CD4-positive, alpha-beta memory T cell (primary cell): ENCODE measurements at regions of chr4 and their contacts with region 1.

Region 1: GRCh38 chr4:1899149-1900086 is 28.2 kb downstream of the NSD2 start:
- DNase-seq: peak; percentile 68 to 79 (median 75)
- H3K4me3 ChIP-seq: no peak overlapping the region
- H3K4me3 Mint-ChIP-seq: peak overlapping the region in 4 of 8 donors; percentile 52 to 69 (median 56)
- H3K27ac ChIP-seq: no peak overlapping the region
- H3K27ac Mint-ChIP-seq: peak overlapping the region in 3 of 7 donors; percentile 19 to 85 (median 85)
- H3K4me1 ChIP-seq: peaks cover 6% of the 10 kb centered on the region
- H3K4me1 Mint-ChIP-seq: peaks cover 12 to 21% (median 14%) of the 10 kb centered on the region in 4 donors
- H3K27me3 ChIP-seq: no peaks in the 10 kb centered on the region
- H3K27me3 Mint-ChIP-seq: no peaks in the 10 kb centered on the region

Region 2: GRCh38 chr4:1693129-1693896 is 206.1 kb before region 1 on chr4:
- CTCF ChIA-PET with region 1: interaction called, 43 read pairs
- POLR2A ChIA-PET with region 1: no interaction called
- intact Hi-C with region 1: loop called (anchors 1 kb)
- DNase-seq: peak; percentile 77 to 81 (median 81)
- H3K4me3 ChIP-seq: no peak overlapping the region
- H3K4me3 Mint-ChIP-seq: no peak overlapping the region
- H3K27ac ChIP-seq: no peak overlapping the region
- H3K27ac Mint-ChIP-seq: peak overlapping the region in 6 of 7 donors; percentile 26 to 90 (median 62)
- H3K4me1 ChIP-seq: peaks cover 4% of the 10 kb centered on the region
- H3K4me1 Mint-ChIP-seq: peaks cover 3 to 5% (median 4%) of the 10 kb centered on the region in 4 donors
- H3K27me3 ChIP-seq: no peaks in the 10 kb centered on the region
- H3K27me3 Mint-ChIP-seq: no peaks in the 10 kb centered on the region

Region 3: DNA sequence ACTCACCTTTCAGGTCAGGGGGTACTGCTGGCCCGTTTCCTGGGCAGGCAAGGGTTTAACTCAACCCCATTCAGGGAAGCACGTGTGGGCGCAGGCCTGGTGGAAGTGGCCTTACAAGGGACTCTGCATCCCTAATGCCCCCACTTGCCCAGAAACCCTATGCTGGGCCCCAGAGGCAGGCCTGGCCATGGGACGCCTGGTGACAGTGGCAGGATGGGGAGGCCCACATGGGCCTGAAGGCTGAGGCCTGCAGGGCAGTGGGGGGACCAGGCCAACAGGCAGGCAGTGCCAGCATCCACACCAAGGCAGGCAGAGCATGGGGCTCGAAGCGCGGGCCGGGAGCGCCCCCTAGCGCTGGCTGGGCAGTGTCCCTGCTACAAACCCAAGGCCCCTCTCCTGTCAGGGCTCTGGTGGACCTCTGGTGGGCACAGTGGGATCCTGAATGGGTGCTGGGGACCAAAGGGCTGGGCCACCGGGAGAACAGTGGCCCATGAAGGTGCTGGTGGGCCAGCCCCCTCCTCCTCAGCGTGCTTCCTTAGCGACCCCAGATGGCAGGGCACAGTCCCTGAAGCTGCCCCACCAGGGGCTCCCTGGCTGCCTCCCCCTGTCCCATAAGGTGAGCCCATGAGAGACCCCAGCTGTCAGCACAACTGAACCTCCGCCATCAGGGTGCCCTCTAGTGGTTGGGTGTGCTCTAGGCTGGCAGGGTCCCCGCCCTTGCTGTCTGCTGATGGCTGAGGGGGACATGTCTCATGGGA is 89.5 kb before region 1 on chr4:
- CTCF ChIA-PET with region 1: interaction called, 32 read pairs
- POLR2A ChIA-PET with region 1: no interaction called
- intact Hi-C with region 1: loop called (anchors 1 kb)
- DNase-seq: peak; percentile 57 to 65 (median 60)
- H3K4me3 ChIP-seq: no peak overlapping the region
- H3K4me3 Mint-ChIP-seq: no peak overlapping the region
- H3K27ac ChIP-seq: no peak overlapping the region
- H3K27ac Mint-ChIP-seq: no peak overlapping the region
- H3K4me1 ChIP-seq: no peaks in the 10 kb centered on the region
- H3K4me1 Mint-ChIP-seq: peaks cover 0 to 1% (median 0%) of the 10 kb centered on the region in 4 donors
- H3K27me3 ChIP-seq: no peaks in the 10 kb centered on the region
- H3K27me3 Mint-ChIP-seq: no peaks in the 10 kb centered on the region

Region 4: DNA sequence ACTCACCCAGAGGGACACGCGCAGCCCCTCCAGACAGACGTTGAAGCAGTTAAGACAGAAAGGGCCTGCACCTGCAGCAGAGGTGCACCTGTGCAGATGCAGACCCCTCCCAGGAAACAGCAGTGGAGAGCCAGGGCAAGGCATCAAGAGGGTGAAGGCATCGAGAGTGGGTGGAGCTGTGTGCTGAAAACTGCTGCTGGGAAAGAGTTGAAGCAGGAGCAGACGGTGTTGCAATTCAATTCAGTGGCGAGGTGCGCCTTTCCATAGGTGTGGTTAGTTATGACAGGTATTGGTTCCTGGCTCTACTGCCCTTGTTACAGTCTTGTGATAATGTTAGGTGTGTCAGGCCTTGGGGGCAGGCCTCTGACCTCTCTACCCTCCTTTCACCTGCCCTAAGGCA is 60.1 kb before region 1 on chr4:
- CTCF ChIA-PET with region 1: interaction called, 10 read pairs
- POLR2A ChIA-PET with region 1: no interaction called
- intact Hi-C with region 1: no loop called
- DNase-seq: no peak
- H3K4me3 ChIP-seq: no peak overlapping the region
- H3K4me3 Mint-ChIP-seq: no peak overlapping the region
- H3K27ac ChIP-seq: no peak overlapping the region
- H3K27ac Mint-ChIP-seq: peak overlapping the region in 2 of 7 donors; percentile 70 to 92
- H3K4me1 ChIP-seq: no peaks in the 10 kb centered on the region
- H3K4me1 Mint-ChIP-seq: peaks cover 1 to 22% (median 5%) of the 10 kb centered on the region in 4 donors
- H3K27me3 ChIP-seq: no peaks in the 10 kb centered on the region
- H3K27me3 Mint-ChIP-seq: no peaks in the 10 kb centered on the region

Region 5: GRCh38 chr4:1856042-1856788 is 43.2 kb before region 1 on chr4 and contains the start of gene LETM1:
- CTCF ChIA-PET with region 1: interaction called, 35 read pairs
- POLR2A ChIA-PET with region 1: interaction called, 12 read pairs
- intact Hi-C with region 1: loop called (anchors 1 kb)
- DNase-seq: peak; percentile 90 to 92 (median 91)
- H3K4me3 ChIP-seq: peak within 1 kb of the TSS; percentile 47 to 89
- H3K4me3 Mint-ChIP-seq: peak within 1 kb of the TSS; percentile 81 to 90 (median 85)
- H3K27ac ChIP-seq: peak within 1 kb of the TSS; percentile 59
- H3K27ac Mint-ChIP-seq: peak within 1 kb of the TSS; percentile 25 to 84 (median 76)
- H3K4me1 ChIP-seq: peaks cover 44% of the 10 kb centered on the region
- H3K4me1 Mint-ChIP-seq: peaks cover 9 to 42% (median 31%) of the 10 kb centered on the region in 4 donors
- H3K27me3 ChIP-seq: no peaks in the 10 kb centered on the region
- H3K27me3 Mint-ChIP-seq: no peaks in the 10 kb centered on the region
- total RNA-seq, gene LETM1: 38.8 to 42.8 TPM

Region 6: DNA sequence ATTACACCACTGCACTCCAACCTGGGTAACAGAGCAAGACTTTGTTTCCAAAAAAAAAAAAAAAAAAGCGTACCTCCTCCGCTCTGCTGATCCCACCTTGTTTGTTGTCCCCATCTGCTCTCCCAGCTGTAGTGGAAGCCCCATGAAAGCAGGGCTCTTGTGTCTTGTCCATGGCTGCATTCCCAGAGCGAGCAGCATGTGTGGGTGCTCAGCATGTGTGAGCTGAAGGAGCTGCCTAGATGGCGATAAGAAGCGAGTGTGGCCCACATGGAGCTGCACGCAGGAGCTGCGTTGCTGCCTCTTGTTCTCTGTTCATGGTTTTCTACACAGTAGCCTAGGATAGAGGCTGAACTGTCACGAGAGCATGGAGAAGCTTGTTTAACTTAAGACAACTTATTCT is 15.8 kb before region 1 on chr4:
- CTCF ChIA-PET with region 1: interaction called, 57 read pairs
- POLR2A ChIA-PET with region 1: interaction called, 4 read pairs
- intact Hi-C with region 1: no loop called
- DNase-seq: no peak
- H3K4me3 ChIP-seq: no peak overlapping the region
- H3K4me3 Mint-ChIP-seq: no peak overlapping the region
- H3K27ac ChIP-seq: no peak overlapping the region
- H3K27ac Mint-ChIP-seq: peak overlapping the region in 2 of 7 donors; percentile 30 to 51
- H3K4me1 ChIP-seq: peaks cover 19% of the 10 kb centered on the region
- H3K4me1 Mint-ChIP-seq: peaks cover 24 to 45% (median 34%) of the 10 kb centered on the region in 4 donors
- H3K27me3 ChIP-seq: no peaks in the 10 kb centered on the region
- H3K27me3 Mint-ChIP-seq: no peaks in the 10 kb centered on the region

Region 7: DNA sequence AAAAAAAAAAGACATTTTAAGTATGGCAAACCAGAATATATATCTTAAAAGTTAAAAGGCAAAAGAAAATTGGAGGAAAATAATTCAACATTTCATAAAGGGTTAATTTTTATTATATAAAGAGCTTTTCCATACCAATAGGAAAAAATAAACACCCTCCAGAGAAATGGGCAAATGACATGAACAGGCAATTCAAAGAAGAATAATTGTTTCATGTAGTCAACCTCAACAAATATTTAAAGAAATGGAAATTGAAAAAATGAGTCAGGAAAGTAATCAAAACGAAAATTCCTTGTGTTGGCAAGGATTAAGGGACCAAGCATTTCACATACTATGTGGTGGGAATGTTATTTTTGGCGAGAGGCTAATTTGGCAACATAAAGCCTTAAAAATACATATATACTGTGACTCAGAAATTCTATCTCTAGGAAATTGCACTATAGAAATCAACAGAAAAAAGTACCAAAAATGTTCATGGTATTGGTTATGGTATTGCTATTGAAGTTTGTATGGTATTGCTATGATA is 254.9 kb after region 1 on chr4:
- CTCF ChIA-PET with region 1: no interaction called
- POLR2A ChIA-PET with region 1: no interaction called
- intact Hi-C with region 1: no loop called
- DNase-seq: no peak
- H3K4me3 ChIP-seq: no peak overlapping the region
- H3K4me3 Mint-ChIP-seq: no peak overlapping the region
- H3K27ac ChIP-seq: no peak overlapping the region
- H3K27ac Mint-ChIP-seq: no peak overlapping the region
- H3K4me1 ChIP-seq: no peaks in the 10 kb centered on the region
- H3K4me1 Mint-ChIP-seq: no peaks in the 10 kb centered on the region
- H3K27me3 ChIP-seq: no peaks in the 10 kb centered on the region
- H3K27me3 Mint-ChIP-seq: no peaks in the 10 kb centered on the region